Heart left ventricle (tissue), 16 donors: ENCODE measurements at regions of chr20 and their contacts with region 1.

Region 1: GRCh38 chr20:50575847-50576720 is 65.9 kb downstream of the PTPN1 start:
- DNase-seq: peak; percentile 62 to 83 (median 72)
- ATAC-seq: peak; percentile 64 to 72 (median 66)
- H3K4me3 ChIP-seq: no peak overlapping the region
- H3K27ac ChIP-seq: peak overlapping the region in 9 of 12 donors; percentile 13 to 84 (median 56)
- H3K4me1 ChIP-seq: peaks cover 0 to 71% (median 36%) of the 10 kb centered on the region in 12 donors
- H3K27me3 ChIP-seq: no peaks in the 10 kb centered on the region
- CTCF ChIP-seq: peak; percentile 53 to 79 (median 70)
- POLR2A ChIP-seq: no peak

Region 2: GRCh38 chr20:50194831-50195755 is 381.0 kb before region 1 on chr20:
- intact Hi-C with region 1: no loop called
- DNase-seq: peak in 1 of 5 donors; percentile 49
- ATAC-seq: no peak
- H3K4me3 ChIP-seq: peak overlapping the region in 5 of 12 donors; percentile 12 to 95 (median 81)
- H3K27ac ChIP-seq: peak overlapping the region in 6 of 12 donors; percentile 33 to 100 (median 99)
- H3K4me1 ChIP-seq: peaks cover 0 to 29% (median 18%) of the 10 kb centered on the region in 12 donors
- H3K27me3 ChIP-seq: no peaks in the 10 kb centered on the region
- CTCF ChIP-seq: no peak
- POLR2A ChIP-seq: no peak

Region 3: DNA sequence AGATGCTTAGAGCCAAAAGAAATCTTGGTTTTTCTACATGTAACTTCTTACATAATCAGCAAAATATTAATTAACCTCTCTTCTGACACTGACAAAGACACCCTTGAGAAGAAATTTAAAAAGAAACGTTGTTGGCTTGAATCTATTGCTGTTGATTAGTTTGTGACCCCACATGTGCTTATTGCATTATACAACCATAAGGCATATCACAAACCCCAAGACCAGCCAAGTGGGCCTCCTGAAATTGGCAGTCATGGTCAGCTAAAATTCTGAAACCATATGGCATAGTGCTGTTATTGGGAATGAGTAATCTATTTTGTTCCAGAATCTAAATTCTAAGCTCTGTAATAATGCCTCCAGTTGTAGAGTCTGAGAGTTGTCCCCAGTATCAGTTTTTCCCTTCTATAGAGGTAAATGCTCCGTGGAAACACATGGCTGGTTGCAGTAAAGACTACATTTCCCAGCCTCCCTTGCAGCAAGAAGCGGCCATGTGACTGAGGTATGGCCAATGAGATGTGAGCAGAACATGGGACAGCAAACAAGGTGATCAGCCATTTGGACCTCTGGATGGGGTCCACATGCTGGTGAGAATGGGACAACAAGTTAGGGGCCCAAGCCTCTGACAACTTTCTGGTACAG is 108.2 kb before region 1 on chr20:
- intact Hi-C with region 1: loop called in 6 of 10 experiments (anchors 2 to 10 kb)
- DNase-seq: peak in 2 of 5 donors; percentile 43 to 49
- ATAC-seq: peak in 3 of 4 donors; percentile 32 to 59 (median 47)
- H3K4me3 ChIP-seq: no peak overlapping the region
- H3K27ac ChIP-seq: no peak overlapping the region
- H3K4me1 ChIP-seq: peaks cover 0 to 41% (median 2%) of the 10 kb centered on the region in 12 donors
- H3K27me3 ChIP-seq: no peaks in the 10 kb centered on the region
- CTCF ChIP-seq: no peak
- POLR2A ChIP-seq: peak in 1 of 2 donors; percentile 11

Region 4: GRCh38 chr20:50478162-50479036 is 97.7 kb before region 1 on chr20:
- intact Hi-C with region 1: loop called (anchors 2 to 10 kb)
- DNase-seq: peak; percentile 45 to 79 (median 63)
- ATAC-seq: peak in 3 of 4 donors; percentile 60 to 78 (median 71)
- H3K4me3 ChIP-seq: no peak overlapping the region
- H3K27ac ChIP-seq: no peak overlapping the region
- H3K4me1 ChIP-seq: peaks cover 0 to 45% (median 12%) of the 10 kb centered on the region in 12 donors
- H3K27me3 ChIP-seq: no peaks in the 10 kb centered on the region
- CTCF ChIP-seq: peak in 11 of 12 donors; percentile 15 to 60 (median 36)
- POLR2A ChIP-seq: no peak

Region 5: DNA sequence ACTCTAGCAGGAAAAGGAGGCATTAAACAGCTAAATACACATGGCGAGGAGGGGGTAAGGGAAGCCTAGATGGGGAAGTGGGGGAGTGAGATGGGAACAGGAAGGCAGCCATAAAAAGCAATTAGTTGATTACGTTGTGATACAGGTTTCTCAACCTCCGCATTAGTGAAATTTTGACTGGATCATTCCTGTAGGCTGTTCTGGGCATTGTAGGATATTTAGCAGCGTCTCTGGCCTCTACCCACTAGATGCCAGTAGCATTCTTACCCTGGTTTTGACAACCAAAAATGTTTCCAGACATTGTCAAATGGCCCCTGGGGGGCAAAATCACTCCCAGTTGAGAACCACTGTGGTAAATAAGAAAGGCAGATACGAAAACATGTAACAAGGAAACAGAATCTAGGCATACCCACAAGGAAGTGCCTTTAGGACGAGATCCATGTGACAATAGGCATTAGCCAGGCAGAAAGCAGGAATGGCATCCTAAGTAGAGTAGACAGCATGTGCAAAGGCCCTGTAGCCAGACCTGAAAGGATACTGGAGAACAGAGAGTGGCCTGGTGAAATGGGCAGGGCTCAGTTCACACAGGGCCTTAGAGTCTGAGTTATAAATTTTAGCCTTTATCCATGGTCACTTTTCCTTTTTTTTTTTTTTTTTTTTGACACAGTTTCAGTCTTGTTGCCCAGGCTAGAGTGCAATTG is 91.7 kb before region 1 on chr20:
- intact Hi-C with region 1: loop called in 9 of 10 experiments (anchors 2 to 10 kb)
- DNase-seq: no peak
- ATAC-seq: no peak
- H3K4me3 ChIP-seq: peak overlapping the region in 10 of 12 donors; percentile 31 to 63 (median 53)
- H3K27ac ChIP-seq: peak overlapping the region in 11 of 12 donors; percentile 55 to 94 (median 78)
- H3K4me1 ChIP-seq: peaks cover 0 to 24% (median 8%) of the 10 kb centered on the region in 12 donors
- H3K27me3 ChIP-seq: no peaks in the 10 kb centered on the region
- CTCF ChIP-seq: no peak
- POLR2A ChIP-seq: no peak

Region 6: GRCh38 chr20:50509935-50510705 is 66.0 kb before region 1 on chr20 and contains the start of gene PTPN1:
- intact Hi-C with region 1: loop called (anchors 2 to 5 kb)
- DNase-seq: peak; percentile 99
- ATAC-seq: peak; percentile 96 to 98 (median 98)
- H3K4me3 ChIP-seq: peak within 1 kb of the TSS; percentile 71 to 100 (median 98)
- H3K27ac ChIP-seq: peak within 1 kb of the TSS; percentile 80 to 96 (median 92)
- H3K4me1 ChIP-seq: peaks cover 0 to 55% (median 41%) of the 10 kb centered on the region in 12 donors
- H3K27me3 ChIP-seq: no peaks in the 10 kb centered on the region
- CTCF ChIP-seq: peak in 2 of 12 donors; percentile 10 to 14
- POLR2A ChIP-seq: peak; percentile 97 to 99
- total RNA-seq, gene PTPN1: 24.2 to 63.3 (median 32.0) TPM